K562 (cell line): ENCODE measurements at regions of chr1 and their contacts with region 1.

Region 1: GRCh38 chr1:65491472-65491871 is 71.0 kb downstream of the LEPR start:
- DNase-seq: no peak
- ATAC-seq: peak; percentile 62
- H3K4me3 ChIP-seq: no peak overlapping the region
- H3K27ac ChIP-seq: peak overlapping the region; percentile 15; the same call in 1 of the 3 replicates
- H3K4me1 ChIP-seq: peaks cover 0 to 18% of the 10 kb centered on the region in 2 experiments; a peak in 4 of 5 replicates
- H3K27me3 ChIP-seq: no peaks in the 10 kb centered on the region
- CTCF ChIP-seq: no peak
- EP300 ChIP-seq: no peak
- POLR2A ChIP-seq: no peak
- RAD21 ChIP-seq: no peak

Region 2: GRCh38 chr1:65478379-65479026 is 13.0 kb before region 1 on chr1:
- CTCF ChIA-PET with region 1: no interaction called
- POLR2A ChIA-PET with region 1: interaction called, 16 read pairs
- in situ Hi-C with region 1: no loop called
- intact Hi-C with region 1: no loop called
- DNase-seq: no peak
- ATAC-seq: 0 out of 3 replicates have a peak, but pooled peaks have one; percentile 2
- H3K4me3 ChIP-seq: peak overlapping the region; percentile 57
- H3K27ac ChIP-seq: peak overlapping the region; percentile 77
- H3K4me1 ChIP-seq: peaks cover 7 to 21% of the 10 kb centered on the region in 2 experiments; a peak in 3 of 5 replicates
- H3K27me3 ChIP-seq: no peaks in the 10 kb centered on the region
- CTCF ChIP-seq: no peak
- EP300 ChIP-seq: no peak
- POLR2A ChIP-seq: 0 out of 2 replicates have a peak, but pooled peaks have one; percentile 23
- RAD21 ChIP-seq: no peak

Region 3: GRCh38 chr1:65558215-65558614 is 66.7 kb after region 1 on chr1:
- CTCF ChIA-PET with region 1: no interaction called
- POLR2A ChIA-PET with region 1: no interaction called
- in situ Hi-C with region 1: no loop called
- intact Hi-C with region 1: no loop called
- DNase-seq: no peak
- ATAC-seq: no peak
- H3K4me3 ChIP-seq: no peak overlapping the region
- H3K27ac ChIP-seq: no peak overlapping the region
- H3K4me1 ChIP-seq: peaks cover 10 to 21% of the 10 kb centered on the region in 2 experiments; a peak in 4 of 5 replicates
- H3K27me3 ChIP-seq: no peaks in the 10 kb centered on the region
- CTCF ChIP-seq: no peak
- EP300 ChIP-seq: no peak
- POLR2A ChIP-seq: no peak
- RAD21 ChIP-seq: no peak

Region 4: DNA sequence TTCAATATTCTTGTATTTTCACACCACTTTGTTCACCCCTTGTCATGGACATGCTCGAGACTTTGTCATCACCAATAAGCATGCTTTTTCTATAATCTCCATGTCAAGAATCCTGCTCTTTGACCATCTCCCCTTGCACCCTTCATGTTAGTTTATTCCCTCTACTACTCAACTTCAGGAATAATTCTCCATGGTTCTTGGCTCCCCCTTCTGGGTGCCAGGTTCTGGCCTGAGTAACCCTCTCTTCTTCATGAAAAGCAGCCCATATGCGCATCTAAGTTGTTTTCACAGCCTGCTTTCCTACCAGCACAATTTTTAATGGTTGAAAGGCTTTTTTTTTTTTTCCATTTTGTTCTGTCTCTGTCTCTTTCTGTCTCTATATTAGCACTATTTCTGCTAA is 89.6 kb after region 1 on chr1:
- CTCF ChIA-PET with region 1: no interaction called
- POLR2A ChIA-PET with region 1: no interaction called
- in situ Hi-C with region 1: no loop called
- intact Hi-C with region 1: no loop called
- DNase-seq: peak in 1 of 4 experiments; percentile 30
- ATAC-seq: peak; percentile 69
- H3K4me3 ChIP-seq: no peak overlapping the region
- H3K27ac ChIP-seq: no peak overlapping the region
- H3K4me1 ChIP-seq: no peaks in the 10 kb centered on the region; a peak in 1 of 5 replicates
- H3K27me3 ChIP-seq: no peaks in the 10 kb centered on the region
- CTCF ChIP-seq: peak; percentile 21 to 57 (median 37); a peak in 3 of 6 replicates
- EP300 ChIP-seq: no peak
- POLR2A ChIP-seq: no peak
- RAD21 ChIP-seq: peak; percentile 63 to 75